Activated CD4-positive, alpha-beta memory T cell treated with anti-CD3 and anti-CD28 coated beads, Interleukin-2, amount 10 ng/mL, durations not matched to agents 7 days and 5 days (primary cell): ENCODE measurements at regions of chr5 and their contacts with region 1.

Region 1: DNA sequence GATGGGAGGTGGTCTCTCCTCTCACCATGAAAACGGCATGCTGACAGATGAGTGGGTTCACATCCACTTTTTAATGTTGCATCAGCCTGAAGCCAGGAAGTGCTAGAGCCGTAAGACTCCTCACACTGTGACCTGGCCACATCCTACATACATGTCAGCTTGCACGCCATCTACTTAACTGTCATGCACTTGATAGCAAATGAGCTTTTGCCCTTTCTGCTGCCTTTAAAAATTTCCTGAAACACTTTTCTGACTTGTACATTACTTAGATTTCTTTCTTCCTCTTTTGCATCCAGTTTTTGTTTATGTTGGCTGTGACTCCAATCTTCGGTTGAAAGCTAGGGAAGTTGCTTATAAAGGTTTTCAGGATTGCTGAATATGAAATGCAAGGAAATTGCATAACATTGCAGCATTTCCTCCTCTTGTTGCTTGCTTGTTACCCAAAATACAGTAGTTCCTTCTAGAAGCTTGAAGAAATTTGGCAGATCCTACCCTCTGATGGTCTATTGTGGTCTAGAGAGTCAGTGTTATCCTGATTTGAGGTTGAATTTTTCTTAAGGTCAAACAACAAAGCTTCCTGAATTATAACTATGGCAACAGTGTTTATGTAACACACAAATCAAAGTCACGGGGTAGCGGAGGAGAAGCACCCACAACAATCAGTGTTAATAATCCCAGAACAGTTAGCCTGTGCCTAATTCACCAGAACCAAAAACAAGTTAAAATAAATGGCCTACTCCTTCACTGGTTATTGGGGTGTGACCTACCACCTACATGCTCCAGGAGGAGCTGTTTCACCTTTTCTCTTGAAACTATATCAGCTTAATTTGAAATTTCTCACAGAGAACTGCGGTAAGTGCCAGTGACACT is 232.5 kb downstream of the ARHGAP26 start:
- DNase-seq: peak; percentile 81
- H3K4me3 Mint-ChIP-seq: peak overlapping the region; percentile 41
- H3K27ac Mint-ChIP-seq: peak overlapping the region; percentile 99
- H3K4me1 Mint-ChIP-seq: peaks cover 76% of the 10 kb centered on the region
- H3K27me3 Mint-ChIP-seq: no peaks in the 10 kb centered on the region

Region 2: GRCh38 chr5:142946547-142947426 is 55.9 kb before region 1 on chr5:
- CTCF ChIA-PET with region 1: no interaction called
- POLR2A ChIA-PET with region 1: no interaction called
- DNase-seq: no peak
- H3K4me3 Mint-ChIP-seq: no peak overlapping the region
- H3K27ac Mint-ChIP-seq: no peak overlapping the region
- H3K4me1 Mint-ChIP-seq: peaks cover 14% of the 10 kb centered on the region
- H3K27me3 Mint-ChIP-seq: no peaks in the 10 kb centered on the region

Region 3: DNA sequence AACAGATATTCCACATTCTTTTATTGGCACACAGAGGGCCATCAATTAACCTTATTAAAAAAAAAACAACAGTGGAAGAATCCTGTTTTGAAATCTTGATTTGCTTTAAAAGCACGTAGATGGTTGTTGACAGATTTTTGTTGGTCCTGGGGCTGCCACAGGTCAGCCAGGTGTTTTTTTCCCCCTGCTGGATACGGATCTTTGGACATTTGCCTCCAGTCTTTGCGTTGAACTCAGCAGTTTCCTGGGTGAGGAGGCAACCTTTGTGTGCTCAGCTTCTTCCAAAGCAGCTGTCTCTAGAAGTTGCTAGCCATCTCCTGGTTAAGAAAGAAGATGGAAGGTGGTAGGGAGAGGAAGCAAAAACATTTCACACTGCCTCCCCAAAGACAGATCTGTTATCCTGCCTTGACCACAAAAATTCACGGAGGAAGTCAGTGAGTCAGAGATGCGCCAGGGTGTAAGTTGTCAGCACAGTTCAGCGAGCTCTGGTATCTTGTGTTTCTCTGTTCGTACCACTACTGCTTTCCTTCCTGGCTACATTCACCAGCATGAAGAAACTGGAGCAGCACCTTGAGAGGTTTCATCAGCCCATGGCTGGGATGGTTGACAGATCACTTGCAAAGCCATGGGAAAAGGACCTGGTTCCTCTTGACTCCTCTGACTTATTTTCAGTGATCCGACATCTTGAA is 25.2 kb before region 1 on chr5:
- CTCF ChIA-PET with region 1: interaction called, 9 read pairs
- POLR2A ChIA-PET with region 1: interaction called, 15 read pairs
- DNase-seq: peak; percentile 64
- H3K4me3 Mint-ChIP-seq: peak overlapping the region; percentile 41
- H3K27ac Mint-ChIP-seq: peak overlapping the region; percentile 97
- H3K4me1 Mint-ChIP-seq: peaks cover 77% of the 10 kb centered on the region
- H3K27me3 Mint-ChIP-seq: no peaks in the 10 kb centered on the region

Region 4: GRCh38 chr5:143824851-143825720 is 822.4 kb after region 1 on chr5:
- CTCF ChIA-PET with region 1: interaction called, 30 read pairs
- POLR2A ChIA-PET with region 1: interaction called, 16 read pairs
- DNase-seq: peak; percentile 86
- H3K4me3 Mint-ChIP-seq: no peak overlapping the region
- H3K27ac Mint-ChIP-seq: no peak overlapping the region
- H3K4me1 Mint-ChIP-seq: peaks cover 20% of the 10 kb centered on the region
- H3K27me3 Mint-ChIP-seq: peaks cover 2% of the 10 kb centered on the region